H1 (cell line): ENCODE measurements at regions of chr11 and their contacts with region 1.

Region 1: DNA sequence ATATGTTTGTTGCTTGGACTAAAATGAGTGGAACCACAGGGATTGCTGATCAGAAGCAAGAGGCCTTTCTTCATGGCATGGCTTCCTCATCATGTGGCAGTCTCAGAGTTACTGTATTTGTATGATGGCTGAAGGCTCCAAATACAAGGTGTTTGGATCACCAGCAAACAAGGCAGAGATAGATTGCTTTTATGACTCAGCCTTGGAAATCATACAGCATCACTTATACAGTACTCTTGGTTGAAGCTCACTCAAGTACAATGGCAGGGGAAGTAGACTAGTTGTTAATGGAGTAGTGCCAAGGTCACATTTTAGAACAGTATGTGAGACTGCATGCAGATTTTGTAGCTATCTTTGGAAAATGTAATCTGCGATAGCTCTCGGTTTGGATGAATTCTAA is 16.6 kb downstream of the CAPRIN1 start:
- DNase-seq: no peak
- H3K4me3 ChIP-seq: no peak overlapping the region
- H3K27ac ChIP-seq: no peak overlapping the region
- H3K4me1 ChIP-seq: no peaks in the 10 kb centered on the region
- H3K27me3 ChIP-seq: no peaks in the 10 kb centered on the region
- CTCF ChIP-seq: no peak
- EP300 ChIP-seq: no peak
- POLR2A ChIP-seq: no peak
- RAD21 ChIP-seq: no peak

Region 2: GRCh38 chr11:33912405-33913361 is 155.4 kb before region 1 on chr11:
- CTCF ChIA-PET with region 1: no interaction called
- POLR2A ChIA-PET with region 1: no interaction called
- DNase-seq: no peak
- H3K4me3 ChIP-seq: no peak overlapping the region
- H3K27ac ChIP-seq: no peak overlapping the region
- H3K4me1 ChIP-seq: peaks cover 0 to 5% (median 0%) of the 10 kb centered on the region in 4 experiments; a peak in 1 of 7 replicates
- H3K27me3 ChIP-seq: no peaks in the 10 kb centered on the region
- CTCF ChIP-seq: no peak
- EP300 ChIP-seq: no peak
- POLR2A ChIP-seq: no peak
- RAD21 ChIP-seq: no peak

Region 3: GRCh38 chr11:34051349-34052035 is 16.6 kb before region 1 on chr11 and contains the start of gene CAPRIN1:
- CTCF ChIA-PET with region 1: interaction called, 9 read pairs
- POLR2A ChIA-PET with region 1: interaction called, 176 read pairs
- DNase-seq: peak; percentile 84 to 86
- H3K4me3 ChIP-seq: peak within 1 kb of the TSS; percentile 86 to 96 (median 94)
- H3K27ac ChIP-seq: peak within 1 kb of the TSS; percentile 97
- H3K4me1 ChIP-seq: peaks cover 0 to 3% (median 3%) of the 10 kb centered on the region in 4 experiments; a peak in 4 of 7 replicates
- H3K27me3 ChIP-seq: no peaks in the 10 kb centered on the region
- CTCF ChIP-seq: no peak
- EP300 ChIP-seq: 0 out of 3 replicates have a peak, but pooled peaks of 1 of the 2 experiments have one; percentile 15
- POLR2A ChIP-seq: peak; percentile 71 to 81
- RAD21 ChIP-seq: no peak
- total RNA-seq, gene CAPRIN1: 295 and 317 TPM in 2 replicates

Region 4: DNA sequence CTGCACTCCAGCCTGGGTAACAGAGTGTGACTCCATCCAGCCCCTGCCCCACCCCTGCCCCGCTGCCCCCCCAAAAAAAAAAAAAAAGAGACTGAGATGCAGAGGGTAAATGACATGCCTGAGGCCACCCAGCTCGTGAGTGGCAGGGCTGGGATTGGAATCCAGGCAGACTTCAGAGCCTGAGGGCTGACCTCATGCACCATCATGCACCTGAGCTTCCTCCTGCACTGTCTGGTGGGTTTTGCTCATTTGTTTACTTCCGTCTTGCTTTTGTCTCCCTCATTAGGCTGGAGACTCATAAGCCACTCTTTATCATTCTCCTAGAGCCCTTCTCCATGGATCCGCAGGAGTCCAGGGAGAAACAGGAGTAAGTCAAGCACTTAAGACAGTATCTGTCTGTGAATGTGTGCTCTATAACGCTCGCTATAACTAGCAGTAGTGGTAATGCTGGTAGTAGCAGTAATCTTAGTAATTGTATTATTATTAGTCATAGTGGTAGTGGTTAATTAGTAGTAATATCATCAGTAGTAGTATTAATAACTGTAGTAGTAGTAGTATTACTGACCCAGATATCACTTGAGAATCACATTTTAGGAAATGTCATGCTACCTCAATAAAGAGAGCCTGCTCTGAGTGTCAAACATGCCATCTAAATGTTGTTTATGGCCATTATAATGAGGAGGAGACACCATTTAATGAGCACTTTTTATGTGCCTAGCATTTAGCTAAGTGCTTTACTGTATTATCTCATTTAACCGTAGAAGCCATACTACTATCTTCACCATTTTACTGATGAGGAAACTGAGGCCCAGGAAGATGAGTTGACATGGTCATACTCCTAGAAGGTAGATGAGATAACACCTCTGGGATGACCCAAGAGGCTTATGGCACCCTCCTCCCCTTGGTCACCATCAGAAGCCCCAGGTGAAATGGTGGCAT is 122.4 kb after region 1 on chr11:
- CTCF ChIA-PET with region 1: no interaction called
- POLR2A ChIA-PET with region 1: no interaction called
- DNase-seq: no peak
- H3K4me3 ChIP-seq: no peak overlapping the region
- H3K27ac ChIP-seq: no peak overlapping the region
- H3K4me1 ChIP-seq: peaks cover 20 to 41% (median 21%) of the 10 kb centered on the region in 4 experiments
- H3K27me3 ChIP-seq: no peaks in the 10 kb centered on the region
- CTCF ChIP-seq: no peak
- EP300 ChIP-seq: no peak
- POLR2A ChIP-seq: no peak
- RAD21 ChIP-seq: no peak